Activated CD4-positive, alpha-beta T cell treated with anti-CD3 and anti-CD28 coated beads, Interleukin-2, amount 10 ng/mL, durations not matched to agents 24 days and 14 days (primary cell): ENCODE measurements at regions of chr2 and their contacts with region 1.

Region 1: DNA sequence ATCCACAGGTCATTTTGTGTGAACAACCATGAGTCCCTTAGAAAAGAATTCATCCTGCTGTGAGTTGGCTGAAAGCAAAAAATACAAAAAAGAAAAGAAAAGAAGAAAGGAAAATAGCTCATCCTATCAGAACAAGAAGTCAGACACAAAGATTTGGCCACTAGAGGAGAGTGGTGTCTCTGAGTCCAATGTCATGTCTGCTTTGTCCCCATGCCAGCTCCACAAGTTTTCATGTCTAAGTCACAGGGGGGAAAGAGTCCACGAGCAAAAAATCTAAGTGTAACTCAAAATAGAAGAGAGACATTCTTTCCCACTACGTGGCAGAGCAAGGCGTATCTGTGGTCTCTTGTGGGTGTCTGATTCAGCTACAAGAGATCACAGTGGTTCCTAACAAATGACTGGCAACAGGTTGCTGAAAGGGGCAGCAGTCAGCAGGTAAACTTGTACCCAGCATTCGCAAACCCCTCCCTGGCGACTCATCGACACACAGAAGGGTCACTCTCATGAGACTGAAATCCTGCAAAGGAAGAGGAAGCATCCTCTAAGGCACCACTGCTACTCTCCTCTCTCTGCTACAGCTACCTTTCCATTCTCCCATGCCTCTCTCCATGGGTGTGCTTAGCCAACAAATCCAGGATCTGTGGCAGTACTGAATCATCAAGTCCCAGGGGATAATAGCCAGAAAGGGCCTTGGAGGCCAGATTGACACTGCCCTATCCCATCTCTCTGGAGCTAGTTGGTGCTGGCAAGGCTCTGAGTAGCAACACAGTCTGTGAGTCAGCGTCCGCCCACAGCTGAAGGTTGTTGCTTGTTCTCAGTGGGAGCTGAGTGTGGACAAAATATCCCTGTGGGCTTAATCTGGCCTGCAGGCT is 123.0 kb upstream of the SLC39A10 start:
- DNase-seq: peak; percentile 89
- H3K4me3 Mint-ChIP-seq: peak overlapping the region; percentile 87
- H3K27ac Mint-ChIP-seq: peak overlapping the region; percentile 99
- H3K4me1 Mint-ChIP-seq: peaks cover 72% of the 10 kb centered on the region
- H3K27me3 Mint-ChIP-seq: no peaks in the 10 kb centered on the region

Region 2: DNA sequence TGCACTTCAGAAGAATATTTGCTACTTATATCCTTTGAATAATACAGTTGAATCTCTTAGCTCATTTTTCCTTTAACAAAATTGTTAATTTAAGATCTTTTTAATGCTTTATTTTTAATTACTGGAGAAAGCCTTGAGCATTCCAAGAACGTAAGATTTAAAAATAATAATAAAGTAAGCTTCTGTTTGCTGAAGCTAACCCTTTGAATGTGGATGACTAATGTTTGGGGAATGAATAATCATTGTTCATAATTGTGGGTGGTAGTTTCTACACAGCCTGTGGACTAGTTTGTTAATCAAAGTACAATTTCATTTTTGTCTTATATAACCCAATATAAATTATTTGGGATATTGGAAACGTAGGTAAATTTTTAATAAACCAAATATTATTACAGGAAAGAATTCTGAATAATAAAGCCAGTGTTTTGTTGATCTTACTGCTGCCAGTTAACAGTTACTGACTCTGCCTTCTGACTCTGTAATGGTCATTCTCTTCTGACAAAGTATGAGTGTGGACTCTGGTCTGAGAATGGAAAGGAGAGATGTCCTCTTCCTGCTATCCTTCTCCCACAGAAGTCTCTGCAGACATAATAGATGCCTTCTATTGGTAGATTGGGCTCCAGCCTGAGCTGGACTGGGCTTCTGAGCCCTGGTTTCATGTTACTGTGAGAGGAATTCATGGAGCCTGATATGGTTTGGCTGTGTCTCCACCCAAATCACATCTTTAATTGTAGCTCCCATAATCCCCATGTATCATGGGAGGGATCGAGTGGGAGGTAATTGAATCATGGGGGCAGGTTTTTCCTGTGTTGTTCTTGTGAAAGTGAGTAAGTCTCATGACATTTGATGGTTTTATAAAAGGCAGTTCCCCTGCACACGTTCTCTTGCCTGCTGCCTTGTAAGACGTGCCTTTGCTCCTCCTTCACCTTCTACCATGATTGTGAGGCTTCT is 169.7 kb before region 1 on chr2:
- intact Hi-C with region 1: loop called (anchors 5 kb)
- DNase-seq: no peak
- H3K4me3 Mint-ChIP-seq: no peak overlapping the region
- H3K27ac Mint-ChIP-seq: peak overlapping the region; percentile 40
- H3K4me1 Mint-ChIP-seq: peaks cover 21% of the 10 kb centered on the region
- H3K27me3 Mint-ChIP-seq: no peaks in the 10 kb centered on the region

Region 3: GRCh38 chr2:195486987-195487644 is 46.9 kb before region 1 on chr2:
- intact Hi-C with region 1: loop called (anchors 1 kb)
- DNase-seq: peak; percentile 77
- H3K4me3 Mint-ChIP-seq: peak overlapping the region; percentile 64
- H3K27ac Mint-ChIP-seq: peak overlapping the region; percentile 68
- H3K4me1 Mint-ChIP-seq: peaks cover 29% of the 10 kb centered on the region
- H3K27me3 Mint-ChIP-seq: no peaks in the 10 kb centered on the region

Region 4: DNA sequence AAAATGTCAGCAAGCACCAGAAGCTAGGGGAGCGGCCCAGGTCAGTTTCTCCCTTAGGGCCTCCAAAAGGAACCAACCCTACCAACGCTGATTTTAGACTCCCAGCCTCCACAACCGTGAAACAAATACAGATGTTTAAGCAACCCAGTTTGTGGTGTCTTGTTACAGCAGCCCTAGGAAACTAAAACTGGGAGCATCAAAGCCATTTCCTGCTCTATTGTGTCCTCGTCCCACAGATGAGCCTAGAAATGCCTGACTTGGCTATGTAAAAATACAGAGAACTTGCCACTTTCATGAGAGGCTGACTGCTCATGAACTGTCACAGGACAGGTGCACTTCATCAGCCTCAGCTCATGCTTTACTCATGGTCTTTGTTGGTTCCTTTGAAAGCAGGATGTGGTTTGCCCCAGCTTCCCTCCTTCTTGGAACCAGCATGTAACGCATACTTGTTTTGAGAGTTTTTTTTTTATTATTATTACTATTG is 25.5 kb after region 1 on chr2:
- intact Hi-C with region 1: loop called (anchors 1 kb)
- DNase-seq: peak; percentile 95
- H3K4me3 Mint-ChIP-seq: peak overlapping the region; percentile 81
- H3K27ac Mint-ChIP-seq: peak overlapping the region; percentile 97
- H3K4me1 Mint-ChIP-seq: peaks cover 51% of the 10 kb centered on the region
- H3K27me3 Mint-ChIP-seq: no peaks in the 10 kb centered on the region

Region 5: GRCh38 chr2:195687320-195688086 is 153.5 kb after region 1 on chr2:
- intact Hi-C with region 1: no loop called
- DNase-seq: no peak
- H3K4me3 Mint-ChIP-seq: no peak overlapping the region
- H3K27ac Mint-ChIP-seq: no peak overlapping the region
- H3K4me1 Mint-ChIP-seq: peaks cover 14% of the 10 kb centered on the region
- H3K27me3 Mint-ChIP-seq: no peaks in the 10 kb centered on the region

Region 6: GRCh38 chr2:196068271-196069209 is 534.5 kb after region 1 on chr2 and contains the start of gene DNAH7:
- intact Hi-C with region 1: loop called (anchors 5 kb)
- DNase-seq: peak; percentile 98
- H3K4me3 Mint-ChIP-seq: peak within 1 kb of the TSS; percentile 88
- H3K27ac Mint-ChIP-seq: peak within 1 kb of the TSS; percentile 81
- H3K4me1 Mint-ChIP-seq: peaks cover 7% of the 10 kb centered on the region
- H3K27me3 Mint-ChIP-seq: peaks cover 26% of the 10 kb centered on the region
- total RNA-seq, gene DNAH7: not detected in 2 replicates

Region 7: GRCh38 chr2:196263181-196263747 is 729.3 kb after region 1 on chr2:
- intact Hi-C with region 1: loop called (anchors 10 kb)
- DNase-seq: peak; percentile 89
- H3K4me3 Mint-ChIP-seq: peak overlapping the region; percentile 72
- H3K27ac Mint-ChIP-seq: peak overlapping the region; percentile 93
- H3K4me1 Mint-ChIP-seq: peaks cover 58% of the 10 kb centered on the region
- H3K27me3 Mint-ChIP-seq: no peaks in the 10 kb centered on the region